H1 (cell line): ENCODE measurements at regions of chr5 and their contacts with region 1.

Region 1: DNA sequence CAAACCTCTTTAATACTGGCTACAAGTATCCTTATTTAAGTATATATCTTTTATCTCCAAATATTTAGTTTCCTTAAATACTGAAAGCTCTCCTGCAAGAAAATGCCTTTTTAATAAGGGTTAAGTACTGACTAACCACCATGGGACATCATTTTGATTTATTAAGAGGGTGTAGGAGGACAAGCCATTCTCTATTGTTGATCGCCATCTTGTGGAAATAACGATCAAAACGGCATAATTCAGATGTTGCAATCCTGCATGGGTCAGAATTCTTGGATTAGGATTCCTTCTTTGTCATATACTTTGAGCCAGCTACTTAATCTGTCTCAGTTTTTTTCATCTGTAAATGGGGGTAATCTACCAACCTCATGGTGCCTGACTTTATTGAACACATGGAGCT is 28.7 kb upstream of the C5orf46 start:
- DNase-seq: peak in 1 of 2 experiments; percentile 15
- H3K4me3 ChIP-seq: no peak overlapping the region
- H3K27ac ChIP-seq: no peak overlapping the region
- H3K4me1 ChIP-seq: no peaks in the 10 kb centered on the region
- H3K27me3 ChIP-seq: no peaks in the 10 kb centered on the region
- CTCF ChIP-seq: peak in 2 of 3 experiments; percentile 62 to 66; a peak in 3 of 4 replicates
- EP300 ChIP-seq: no peak
- POLR2A ChIP-seq: no peak
- RAD21 ChIP-seq: peak; percentile 91 to 94

Region 2: DNA sequence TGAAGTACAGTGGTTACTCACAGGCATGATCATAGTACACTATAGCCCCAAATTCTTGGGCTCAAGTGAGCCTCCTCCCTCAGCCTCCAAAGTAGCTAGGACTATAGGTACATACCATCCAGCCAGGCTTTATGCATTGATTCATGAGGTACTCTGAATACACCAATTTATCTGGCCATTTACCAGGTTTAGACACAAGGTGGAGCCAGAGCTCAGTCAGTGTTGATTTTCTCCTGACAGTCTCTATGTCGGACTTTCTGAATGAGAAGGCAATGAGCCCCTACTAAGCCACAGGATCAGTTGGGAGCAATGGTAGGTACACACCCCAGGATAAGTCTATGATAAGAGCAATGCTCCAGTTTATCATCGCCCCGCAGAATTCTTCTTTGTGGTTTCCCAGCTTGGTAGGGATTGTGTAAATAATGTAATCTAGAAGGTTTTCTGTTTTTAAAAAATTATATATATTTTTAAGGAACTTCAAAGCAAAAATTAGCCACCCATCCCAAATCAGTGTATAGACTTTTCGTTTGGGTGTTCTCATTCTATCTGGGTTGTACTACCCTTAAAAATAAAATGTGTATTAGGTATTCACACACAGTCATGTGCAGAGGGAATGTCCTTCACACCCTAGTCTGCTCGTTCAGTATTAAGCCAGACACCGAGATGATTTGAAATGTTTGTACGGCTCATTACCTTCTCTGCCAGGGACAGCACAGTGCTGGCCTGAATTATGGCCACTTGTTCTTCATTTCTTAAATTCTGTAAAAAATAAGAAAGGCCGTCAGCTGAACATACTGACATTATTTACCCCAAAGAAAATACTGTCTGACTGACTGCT is 306.8 kb before region 1 on chr5:
- CTCF ChIA-PET with region 1: interaction called, 12 read pairs
- POLR2A ChIA-PET with region 1: no interaction called
- DNase-seq: peak; percentile 25 to 82
- H3K4me3 ChIP-seq: no peak overlapping the region
- H3K27ac ChIP-seq: no peak overlapping the region
- H3K4me1 ChIP-seq: no peaks in the 10 kb centered on the region; a peak in 1 of 7 replicates
- H3K27me3 ChIP-seq: no peaks in the 10 kb centered on the region
- CTCF ChIP-seq: peak in 2 of 3 experiments; percentile 77 to 88; a peak in 3 of 4 replicates
- EP300 ChIP-seq: no peak
- POLR2A ChIP-seq: no peak
- RAD21 ChIP-seq: peak; percentile 86 to 93

Region 3: GRCh38 chr5:147849226-147849625 is 85.8 kb before region 1 on chr5:
- CTCF ChIA-PET with region 1: interaction called, 126 read pairs
- POLR2A ChIA-PET with region 1: interaction called, 249 read pairs
- DNase-seq: no peak
- H3K4me3 ChIP-seq: no peak overlapping the region
- H3K27ac ChIP-seq: no peak overlapping the region
- H3K4me1 ChIP-seq: no peaks in the 10 kb centered on the region
- H3K27me3 ChIP-seq: peaks cover 0 to 2% (median 0%) of the 10 kb centered on the region in 4 experiments; a peak in 1 of 7 replicates
- CTCF ChIP-seq: no peak
- EP300 ChIP-seq: no peak
- POLR2A ChIP-seq: no peak; a peak in 1 of 3 replicates
- RAD21 ChIP-seq: no peak

Region 4: DNA sequence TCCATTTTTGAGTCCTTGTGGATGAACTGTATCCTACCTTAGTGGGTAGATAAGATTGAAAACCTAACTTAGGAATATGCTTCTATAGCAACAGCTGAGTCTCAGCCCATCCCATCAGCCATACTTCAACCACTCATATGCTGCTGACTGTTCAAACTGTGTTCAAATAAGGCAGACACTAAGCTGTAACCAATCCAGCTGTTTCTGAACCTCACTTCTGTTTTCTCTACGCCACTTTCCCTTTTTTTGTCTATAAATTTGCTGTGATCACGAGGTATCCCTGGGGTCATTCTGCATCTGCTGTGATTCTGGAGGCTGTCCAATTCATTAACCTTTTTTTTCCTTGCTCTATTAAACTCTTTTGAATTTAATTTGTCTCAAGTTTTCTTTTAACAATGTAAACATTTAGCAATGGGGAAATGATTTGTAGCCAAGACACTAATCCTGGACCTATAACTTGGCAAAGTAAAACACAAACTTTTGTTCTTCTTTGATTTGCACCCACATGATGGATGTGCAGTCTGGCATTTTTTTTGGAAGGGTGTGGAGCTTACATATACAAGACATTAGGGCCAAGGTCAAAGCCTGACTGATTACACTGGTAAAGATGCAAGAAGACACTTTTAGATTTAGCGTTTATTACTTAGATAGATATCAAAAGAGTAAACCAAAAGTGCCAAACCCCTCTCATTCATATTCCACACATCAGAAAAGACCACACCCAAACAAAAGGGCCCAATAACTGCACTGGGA is 71.4 kb before region 1 on chr5:
- CTCF ChIA-PET with region 1: interaction called, 126 read pairs
- POLR2A ChIA-PET with region 1: interaction called, 249 read pairs
- DNase-seq: no peak
- H3K4me3 ChIP-seq: no peak overlapping the region
- H3K27ac ChIP-seq: no peak overlapping the region
- H3K4me1 ChIP-seq: peaks cover 2 to 21% (median 19%) of the 10 kb centered on the region in 4 experiments; a peak in 6 of 7 replicates
- H3K27me3 ChIP-seq: no peaks in the 10 kb centered on the region
- CTCF ChIP-seq: no peak
- EP300 ChIP-seq: no peak
- POLR2A ChIP-seq: peak in 1 of 2 experiments; percentile 69; a peak in 1 of 3 replicates
- RAD21 ChIP-seq: no peak

Region 5: GRCh38 chr5:147887024-147887627 is 47.9 kb before region 1 on chr5:
- CTCF ChIA-PET with region 1: interaction called, 163 read pairs
- POLR2A ChIA-PET with region 1: interaction called, 4 read pairs
- DNase-seq: no peak
- H3K4me3 ChIP-seq: no peak overlapping the region
- H3K27ac ChIP-seq: no peak overlapping the region
- H3K4me1 ChIP-seq: peaks cover 0 to 7% (median 0%) of the 10 kb centered on the region in 4 experiments; a peak in 4 of 7 replicates
- H3K27me3 ChIP-seq: no peaks in the 10 kb centered on the region
- CTCF ChIP-seq: peak in 2 of 3 experiments; percentile 43 to 50; a peak in 2 of 4 replicates
- EP300 ChIP-seq: no peak
- POLR2A ChIP-seq: no peak
- RAD21 ChIP-seq: peak; percentile 68 to 72

Region 6: DNA sequence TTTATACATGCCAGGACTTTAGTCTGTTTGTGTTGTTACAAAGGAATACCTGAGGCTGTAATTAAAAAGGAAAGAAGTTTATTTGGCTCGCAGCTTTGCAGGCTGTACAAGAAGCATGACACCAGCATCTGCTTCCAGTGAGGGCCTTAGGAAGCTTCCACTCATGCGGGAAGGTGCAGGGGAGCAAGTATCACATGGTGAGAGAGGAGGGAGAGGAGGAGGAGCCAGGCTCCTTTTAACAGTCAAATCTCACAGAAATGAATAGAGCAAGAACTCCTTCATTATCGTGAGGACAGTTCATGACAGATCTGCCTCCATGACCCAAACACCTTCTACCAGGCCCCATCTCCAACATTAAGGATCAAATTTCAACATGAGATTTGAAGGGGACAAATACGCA is 10.0 kb before region 1 on chr5:
- CTCF ChIA-PET with region 1: interaction called, 26 read pairs
- POLR2A ChIA-PET with region 1: no interaction called
- DNase-seq: no peak
- H3K4me3 ChIP-seq: no peak overlapping the region
- H3K27ac ChIP-seq: no peak overlapping the region
- H3K4me1 ChIP-seq: 0 out of 7 replicates have a peak, but pooled peaks cover 0 to 3% (median 0%) of the 10 kb centered on the region in 4 experiments
- H3K27me3 ChIP-seq: no peaks in the 10 kb centered on the region
- CTCF ChIP-seq: no peak
- EP300 ChIP-seq: no peak
- POLR2A ChIP-seq: no peak
- RAD21 ChIP-seq: no peak